HCT116 (cell line): ENCODE measurements at regions of chr6 and their contacts with region 1.

Region 1: DNA sequence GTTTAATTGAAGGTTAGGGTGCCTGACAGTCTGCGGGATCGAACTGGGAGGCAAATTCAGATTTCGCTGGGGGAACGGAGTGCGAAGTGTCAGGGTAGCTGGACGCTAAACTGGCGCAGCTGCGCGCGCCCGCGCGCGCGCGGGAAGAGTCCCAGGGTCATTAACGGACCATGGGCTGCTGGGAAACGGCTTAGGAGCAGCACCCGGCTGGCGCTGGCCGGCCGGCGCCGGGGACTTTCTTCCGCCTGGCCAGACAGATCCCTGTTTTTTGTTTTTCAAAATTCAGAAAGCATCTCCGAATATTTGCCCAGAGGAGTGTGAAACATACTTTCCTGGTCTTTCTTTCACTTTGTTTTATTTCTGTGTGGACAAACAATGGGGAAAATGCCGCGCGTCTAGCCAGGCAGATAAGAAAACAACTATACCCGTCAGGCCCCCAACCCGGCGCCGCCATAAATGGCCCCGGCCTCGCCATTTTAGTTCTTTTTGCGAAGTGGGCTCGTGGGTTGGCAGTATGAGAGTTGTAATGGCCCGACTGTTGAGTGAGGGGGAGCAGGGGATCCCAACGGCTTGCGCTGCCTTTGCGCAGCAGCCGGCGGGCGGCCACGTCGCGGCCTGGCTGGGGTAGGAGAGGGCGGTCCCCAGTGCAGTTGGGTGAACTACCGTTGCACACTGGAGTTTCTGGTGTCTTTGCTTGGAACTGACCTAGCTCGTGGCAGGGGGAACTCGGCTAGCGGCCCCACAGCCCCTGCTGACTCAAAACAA is 7.1 kb downstream of the HSPA1B start:
- DNase-seq: peak; percentile 77
- ATAC-seq: peak; percentile 83
- H3K4me3 ChIP-seq: peak overlapping the region; percentile 98 to 99
- H3K27ac ChIP-seq: peak overlapping the region; percentile 93
- H3K4me1 ChIP-seq: peaks cover 25 to 64% of the 10 kb centered on the region in 2 experiments
- H3K27me3 ChIP-seq: no peaks in the 10 kb centered on the region
- CTCF ChIP-seq: no peak
- POLR2A ChIP-seq: peak; percentile 97
- RAD21 ChIP-seq: no peak

Region 2: GRCh38 chr6:31541658-31542521 is 292.7 kb before region 1 on chr6 and contains the start of gene DDX39B:
- CTCF ChIA-PET with region 1: no interaction called
- POLR2A ChIA-PET with region 1: interaction called, 4 read pairs
- RAD21 ChIA-PET with region 1: no interaction called
- intact Hi-C with region 1: loop called (anchors 10 kb)
- DNase-seq: peak; percentile 95
- ATAC-seq: peak; percentile 74
- H3K4me3 ChIP-seq: peak within 1 kb of the TSS; percentile 85 to 98
- H3K27ac ChIP-seq: peak within 1 kb of the TSS; percentile 96
- H3K4me1 ChIP-seq: peaks cover 17 to 36% of the 10 kb centered on the region in 2 experiments
- H3K27me3 ChIP-seq: no peaks in the 10 kb centered on the region
- CTCF ChIP-seq: no peak
- POLR2A ChIP-seq: peak; percentile 79
- RAD21 ChIP-seq: no peak
- total RNA-seq, gene DDX39B: 545 TPM

Region 3: DNA sequence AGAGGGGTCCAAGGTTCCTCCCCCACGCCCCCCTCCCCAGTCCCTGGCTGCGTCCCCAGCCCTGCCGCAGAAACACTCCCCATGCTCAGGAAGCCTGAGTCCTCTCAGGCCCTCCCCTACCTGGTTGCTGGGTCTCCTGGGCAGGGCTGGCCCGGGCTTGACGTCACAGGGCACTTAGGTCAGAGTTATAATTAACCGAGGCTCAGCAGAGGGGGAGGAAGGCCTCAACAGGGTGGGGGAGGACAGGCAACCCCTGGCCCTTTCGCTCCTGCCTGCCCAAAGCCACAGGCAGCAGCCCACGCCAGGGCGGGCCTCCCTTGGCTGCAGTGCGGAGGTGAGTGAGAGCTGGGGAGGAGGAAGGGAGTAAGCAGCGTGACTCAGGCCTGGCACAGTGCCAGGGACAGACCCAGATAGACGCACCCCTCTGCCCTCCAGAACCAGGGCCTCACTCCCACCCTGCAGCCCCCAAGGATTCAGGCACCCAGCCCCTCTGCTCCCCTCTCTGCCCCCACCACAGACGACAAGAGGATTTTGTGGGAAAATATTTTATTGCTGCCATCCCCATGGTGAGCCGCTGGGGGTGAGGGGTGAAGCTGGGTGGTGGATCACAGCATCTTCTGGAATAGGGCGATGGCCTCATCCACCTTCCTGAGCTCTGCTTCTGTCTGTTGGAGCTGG is 57.5 kb before region 1 on chr6 and contains the start of gene VWA7:
- CTCF ChIA-PET with region 1: interaction called, 11 read pairs
- POLR2A ChIA-PET with region 1: interaction called, 6 read pairs
- RAD21 ChIA-PET with region 1: interaction called in 1 of 2 experiments, 5 read pairs
- intact Hi-C with region 1: loop called (anchors 1 kb)
- DNase-seq: peak; percentile 84
- ATAC-seq: peak; percentile 79
- H3K4me3 ChIP-seq: peak within 1 kb of the TSS; percentile 40 to 56
- H3K27ac ChIP-seq: peak within 1 kb of the TSS; percentile 79
- H3K4me1 ChIP-seq: peaks cover 41 to 56% of the 10 kb centered on the region in 2 experiments
- H3K27me3 ChIP-seq: no peaks in the 10 kb centered on the region
- CTCF ChIP-seq: no peak
- POLR2A ChIP-seq: no peak
- RAD21 ChIP-seq: no peak
- total RNA-seq, gene VWA7: 14.6 TPM

Region 4: DNA sequence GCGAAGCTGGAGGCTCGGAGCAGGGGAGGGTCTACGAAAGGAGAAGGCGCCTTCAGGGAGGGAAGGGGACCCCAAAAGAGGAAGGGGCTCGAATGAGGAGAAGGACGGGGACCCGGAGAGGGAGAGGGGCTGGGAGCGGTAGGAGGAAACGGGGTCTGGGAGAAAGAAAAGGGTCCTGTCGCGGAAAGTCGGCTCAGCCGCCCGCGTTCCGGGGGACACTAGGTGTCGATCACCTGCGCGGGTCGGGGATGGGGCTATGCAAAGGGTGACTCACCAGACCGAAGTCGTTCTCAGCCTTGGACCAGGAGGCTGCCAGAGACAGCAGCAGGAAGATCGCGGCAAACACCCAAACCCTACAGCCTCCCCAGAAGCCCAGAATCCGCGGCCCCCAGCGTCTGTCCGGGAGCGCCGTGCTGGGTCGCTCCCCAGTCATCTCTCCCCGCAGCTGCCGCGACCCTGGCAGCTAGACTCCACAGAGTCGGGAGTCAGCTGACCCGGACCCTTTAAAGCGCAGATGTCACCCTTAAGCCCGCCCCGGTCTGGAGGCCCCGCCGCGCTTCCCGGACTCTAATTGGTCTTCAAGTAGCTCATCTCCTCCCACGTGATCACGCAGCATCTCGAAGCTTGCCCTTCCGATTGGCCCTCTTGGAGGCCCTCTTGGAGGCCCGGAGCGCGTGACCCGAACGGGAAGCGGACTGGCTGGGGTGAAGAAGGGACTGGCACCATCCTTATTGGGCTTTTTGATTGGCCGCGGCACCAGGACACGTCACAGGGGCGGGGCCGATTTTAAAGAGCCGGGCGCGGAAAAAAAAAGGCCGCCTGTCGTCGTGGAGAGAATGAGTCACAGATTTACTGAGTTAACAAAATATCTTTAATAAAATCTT is 28.0 kb after region 1 on chr6 and contains the start of gene NEU1:
- CTCF ChIA-PET with region 1: no interaction called
- POLR2A ChIA-PET with region 1: interaction called, 9 read pairs
- RAD21 ChIA-PET with region 1: no interaction called
- intact Hi-C with region 1: loop called (anchors 2 kb)
- DNase-seq: peak; percentile 100
- ATAC-seq: peak; percentile 96
- H3K4me3 ChIP-seq: peak within 1 kb of the TSS; percentile 78 to 79
- H3K27ac ChIP-seq: peak within 1 kb of the TSS; percentile 41
- H3K4me1 ChIP-seq: peaks cover 0 to 31% of the 10 kb centered on the region in 2 experiments; a peak in 3 of 4 replicates
- H3K27me3 ChIP-seq: no peaks in the 10 kb centered on the region
- CTCF ChIP-seq: no peak
- POLR2A ChIP-seq: peak; percentile 83
- RAD21 ChIP-seq: no peak
- total RNA-seq, gene NEU1: 15.1 TPM

Region 5: DNA sequence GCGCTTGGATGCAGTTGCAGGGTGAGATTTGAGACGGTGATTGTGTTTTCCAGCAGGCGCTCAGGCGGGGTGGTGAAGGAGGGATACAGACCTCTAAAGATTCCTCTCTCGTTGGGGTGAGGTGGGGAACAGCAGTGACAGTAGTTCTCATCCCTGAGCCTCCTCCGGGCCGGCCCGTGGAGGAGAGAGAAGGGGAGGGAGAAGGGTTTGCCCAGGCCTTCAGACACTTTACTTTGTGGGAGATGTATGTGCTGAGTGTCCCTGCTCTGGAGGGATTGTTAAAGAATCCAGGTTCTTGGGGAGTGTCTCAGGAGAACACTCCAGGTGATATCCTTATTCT is 1060.4 kb after region 1 on chr6:
- CTCF ChIA-PET with region 1: no interaction called
- POLR2A ChIA-PET with region 1: no interaction called
- RAD21 ChIA-PET with region 1: no interaction called
- intact Hi-C with region 1: no loop called
- DNase-seq: no peak
- ATAC-seq: peak; percentile 38
- H3K4me3 ChIP-seq: peak overlapping the region; percentile 71 to 72
- H3K27ac ChIP-seq: peak overlapping the region; percentile 72
- H3K4me1 ChIP-seq: peaks cover 4 to 16% of the 10 kb centered on the region in 2 experiments; a peak in 3 of 4 replicates
- H3K27me3 ChIP-seq: no peaks in the 10 kb centered on the region
- CTCF ChIP-seq: no peak
- POLR2A ChIP-seq: no peak
- RAD21 ChIP-seq: no peak